ENCODE measurements at regions of chr3 and their contacts with region 1.

Region 1: DNA sequence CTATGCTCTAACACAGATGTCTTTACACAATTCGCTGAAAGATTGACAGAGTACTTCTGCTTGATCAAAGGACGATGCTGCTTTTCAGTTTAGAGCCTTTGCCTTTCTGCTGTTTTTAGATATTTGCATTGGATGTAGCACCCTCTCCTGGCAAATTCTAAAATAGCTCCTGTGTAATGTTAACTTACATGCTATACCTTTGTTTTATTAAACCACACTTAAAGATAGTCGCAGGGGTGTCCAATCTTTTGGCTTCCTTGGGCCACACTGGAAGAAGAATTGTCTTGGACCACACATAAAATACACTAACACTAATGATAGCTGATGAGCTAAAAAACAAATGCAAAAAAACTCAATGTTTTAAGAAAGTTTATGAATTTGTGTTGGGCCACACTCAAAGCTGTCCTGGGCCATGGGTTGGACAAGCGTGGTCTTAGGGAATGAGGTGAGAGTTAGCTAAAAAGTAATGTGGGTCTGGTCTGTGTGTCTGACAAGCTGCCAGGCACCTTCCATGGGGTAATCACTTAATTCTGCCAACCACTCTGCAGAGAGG is 62.9 kb downstream of the ATG7 start:
- DNase-seq: no peak
- ATAC-seq: peak; percentile 81
- H3K4me3 Mint-ChIP-seq: no peak overlapping the region
- H3K27ac Mint-ChIP-seq: no peak overlapping the region
- H3K4me1 Mint-ChIP-seq: peaks cover 7% of the 10 kb centered on the region
- H3K27me3 Mint-ChIP-seq: no peaks in the 10 kb centered on the region

Region 2: DNA sequence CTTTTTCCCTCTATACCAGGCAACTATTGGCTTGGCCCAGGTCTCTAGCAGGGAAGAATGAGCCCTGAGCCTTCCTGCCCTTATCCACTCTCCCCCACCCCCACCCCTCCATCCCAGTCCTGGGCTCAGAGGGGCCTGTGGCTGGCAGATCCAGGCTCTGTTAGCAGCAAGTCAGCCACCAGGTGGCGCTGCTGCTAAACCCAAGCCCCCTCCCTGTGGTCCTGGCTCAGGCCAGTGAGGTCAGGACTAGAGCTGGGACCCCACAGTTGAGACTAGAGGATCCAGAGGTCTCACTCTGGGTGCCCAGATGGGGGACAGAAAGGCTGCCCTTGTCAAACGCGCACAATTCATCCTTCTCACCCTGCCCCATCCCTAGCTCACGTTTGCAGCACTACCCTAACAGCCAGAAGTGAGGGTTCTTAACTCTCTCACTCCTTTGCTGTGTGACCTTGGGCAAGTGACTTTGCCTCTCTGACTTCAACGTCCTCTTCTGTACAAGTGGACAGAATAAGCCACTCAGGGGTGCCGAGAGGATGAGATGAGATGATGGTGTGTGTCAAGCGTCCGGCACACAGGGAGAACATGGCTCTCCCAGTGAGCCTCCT is 389.3 kb before region 1 on chr3:
- CTCF ChIA-PET with region 1: interaction called, 5 read pairs
- POLR2A ChIA-PET with region 1: no interaction called
- intact Hi-C with region 1: loop called (anchors 5 to 10 kb)
- DNase-seq: peak; percentile 79
- ATAC-seq: peak; percentile 83
- H3K4me3 Mint-ChIP-seq: no peak overlapping the region
- H3K27ac Mint-ChIP-seq: no peak overlapping the region
- H3K4me1 Mint-ChIP-seq: no peaks in the 10 kb centered on the region
- H3K27me3 Mint-ChIP-seq: peaks cover 5% of the 10 kb centered on the region

Region 3: GRCh38 chr3:11155341-11156025 is 179.6 kb before region 1 on chr3:
- CTCF ChIA-PET with region 1: interaction called, 4 read pairs
- POLR2A ChIA-PET with region 1: no interaction called
- intact Hi-C with region 1: loop called in 1 of 2 experiments (anchors 1 kb)
- DNase-seq: peak; percentile 56
- ATAC-seq: peak; percentile 74
- H3K4me3 Mint-ChIP-seq: no peak overlapping the region
- H3K27ac Mint-ChIP-seq: no peak overlapping the region
- H3K4me1 Mint-ChIP-seq: peaks cover 12% of the 10 kb centered on the region
- H3K27me3 Mint-ChIP-seq: peaks cover 61% of the 10 kb centered on the region

Region 4: GRCh38 chr3:11323813-11324212 is 11.3 kb before region 1 on chr3:
- CTCF ChIA-PET with region 1: interaction called, 24 read pairs
- POLR2A ChIA-PET with region 1: no interaction called
- intact Hi-C with region 1: no loop called
- DNase-seq: no peak
- ATAC-seq: no peak
- H3K4me3 Mint-ChIP-seq: no peak overlapping the region
- H3K27ac Mint-ChIP-seq: no peak overlapping the region
- H3K4me1 Mint-ChIP-seq: peaks cover 9% of the 10 kb centered on the region
- H3K27me3 Mint-ChIP-seq: no peaks in the 10 kb centered on the region

Region 5: DNA sequence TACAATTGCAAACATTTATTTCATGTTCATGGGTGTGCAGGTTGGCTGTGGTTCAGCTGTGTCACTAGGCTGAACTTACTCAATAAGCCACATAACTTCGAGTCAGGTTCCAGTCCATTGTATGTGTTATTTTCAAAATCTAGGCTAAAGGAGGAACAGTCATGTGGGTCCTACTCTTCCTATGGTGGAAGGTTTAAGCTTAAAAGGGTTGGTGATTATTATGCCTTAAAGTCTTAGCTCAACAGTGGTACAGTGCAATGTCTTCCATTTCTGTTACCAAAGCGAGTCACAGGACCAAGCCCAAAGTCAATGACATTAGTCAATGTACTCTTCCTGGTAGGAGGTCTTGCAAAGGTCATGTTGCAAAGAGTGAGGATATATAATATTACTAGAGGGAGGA is 15.2 kb after region 1 on chr3:
- CTCF ChIA-PET with region 1: interaction called, 18 read pairs
- POLR2A ChIA-PET with region 1: no interaction called
- intact Hi-C with region 1: no loop called
- DNase-seq: no peak
- ATAC-seq: no peak
- H3K4me3 Mint-ChIP-seq: no peak overlapping the region
- H3K27ac Mint-ChIP-seq: no peak overlapping the region
- H3K4me1 Mint-ChIP-seq: no peaks in the 10 kb centered on the region
- H3K27me3 Mint-ChIP-seq: no peaks in the 10 kb centered on the region